IMR-90 (cell line): ENCODE measurements at regions of chr1 and their contacts with region 1.

Region 1: DNA sequence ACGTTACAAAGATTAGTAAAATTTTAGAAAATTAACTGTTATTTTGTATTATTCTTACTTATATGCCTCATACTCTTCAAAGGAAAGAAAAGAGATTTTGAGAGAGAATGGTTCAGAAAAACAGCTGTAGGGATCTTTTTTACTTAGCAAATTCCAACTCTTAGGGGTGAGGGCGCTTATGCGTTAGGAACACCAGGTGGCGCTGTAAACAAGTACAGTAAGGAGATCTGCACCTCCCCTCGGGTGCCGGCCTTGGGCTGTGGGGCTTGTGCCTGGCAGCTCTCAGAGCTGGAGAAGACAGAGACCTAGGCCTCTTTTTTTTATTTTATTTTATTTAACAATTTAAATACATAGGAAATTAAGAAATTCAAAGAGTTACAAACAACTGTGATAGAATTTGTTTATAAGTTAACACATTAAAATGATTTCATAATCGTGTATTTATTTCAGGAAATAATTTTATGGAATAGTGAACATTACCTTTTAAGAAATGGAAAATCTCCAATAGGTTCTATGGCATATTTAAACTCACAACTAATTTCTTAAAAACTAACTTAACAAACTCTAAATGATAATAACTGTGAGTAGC is 32.6 kb downstream of the UTP25 start:
- DNase-seq: peak; percentile 86
- ATAC-seq: peak; percentile 96
- H3K4me3 ChIP-seq: no peak overlapping the region
- H3K27ac ChIP-seq: no peak overlapping the region
- H3K4me1 ChIP-seq: peaks cover 3% of the 10 kb centered on the region; the same call in 1 of the 2 replicates
- H3K27me3 ChIP-seq: peaks cover 2% of the 10 kb centered on the region
- CTCF ChIP-seq: peak; percentile 90
- POLR2A ChIP-seq: no peak
- RAD21 ChIP-seq: peak; percentile 87

Region 2: DNA sequence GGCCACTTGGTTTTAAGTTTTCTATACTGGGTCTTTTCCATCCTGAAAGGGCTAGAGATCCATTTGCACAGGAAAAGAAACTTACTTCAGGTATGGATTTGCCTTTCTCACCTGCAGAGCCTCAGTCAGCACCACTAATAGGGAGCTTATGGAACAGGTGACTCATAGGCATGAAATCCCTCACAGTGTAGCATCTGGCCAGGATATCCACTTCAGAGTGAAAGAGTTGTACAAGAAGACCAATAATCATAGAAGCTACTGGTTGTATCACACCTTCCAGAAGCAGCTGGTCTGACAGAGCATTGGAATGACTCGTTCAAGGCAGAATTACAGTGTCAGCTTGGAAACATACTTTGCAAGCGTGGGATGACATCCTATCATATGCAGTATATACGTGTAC is 51.4 kb after region 1 on chr1:
- CTCF ChIA-PET with region 1: no interaction called
- POLR2A ChIA-PET with region 1: no interaction called
- dilution Hi-C with region 1: no loop called
- in situ Hi-C with region 1: no loop called
- intact Hi-C with region 1: no loop called
- DNase-seq: no peak
- ATAC-seq: no peak
- H3K4me3 ChIP-seq: no peak overlapping the region
- H3K27ac ChIP-seq: no peak overlapping the region
- H3K4me1 ChIP-seq: no peaks in the 10 kb centered on the region
- H3K27me3 ChIP-seq: no peaks in the 10 kb centered on the region
- CTCF ChIP-seq: no peak
- POLR2A ChIP-seq: no peak
- RAD21 ChIP-seq: no peak

Region 3: GRCh38 chr1:209937996-209938959 is 77.9 kb after region 1 on chr1 and contains the start of gene SYT14:
- CTCF ChIA-PET with region 1: no interaction called
- POLR2A ChIA-PET with region 1: no interaction called
- dilution Hi-C with region 1: no loop called
- in situ Hi-C with region 1: no loop called
- intact Hi-C with region 1: loop called (anchors 1 kb)
- DNase-seq: peak; percentile 25
- ATAC-seq: peak; percentile 86
- H3K4me3 ChIP-seq: peak within 1 kb of the TSS; percentile 61
- H3K27ac ChIP-seq: no peak within 1 kb of the TSS; the same call in 1 of the 2 replicates
- H3K4me1 ChIP-seq: no peaks in the 10 kb centered on the region; the same call in 1 of the 2 replicates
- H3K27me3 ChIP-seq: peaks cover 5% of the 10 kb centered on the region
- CTCF ChIP-seq: no peak
- POLR2A ChIP-seq: no peak
- RAD21 ChIP-seq: no peak
- total RNA-seq, gene SYT14: 1.3 and 1.4 TPM in 2 replicates

Region 4: DNA sequence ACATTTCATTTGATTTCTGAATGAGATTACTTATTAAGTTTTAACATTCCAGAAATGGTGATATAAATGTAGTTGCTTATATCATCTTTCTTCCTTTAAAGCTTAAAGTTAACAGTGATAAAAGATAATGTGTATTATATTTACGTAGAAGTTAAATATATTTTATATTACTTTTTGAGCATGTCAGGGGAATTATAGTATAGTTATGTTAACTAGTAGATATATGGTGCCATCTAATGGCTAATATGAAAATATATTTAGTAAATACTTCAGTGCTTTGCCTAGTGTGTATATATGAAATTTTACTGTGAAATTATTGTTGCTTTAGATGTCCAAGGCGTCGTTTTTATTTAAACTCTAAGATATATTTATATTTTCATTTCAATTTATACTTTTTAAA is 129.1 kb after region 1 on chr1:
- CTCF ChIA-PET with region 1: interaction called, 27 read pairs
- POLR2A ChIA-PET with region 1: no interaction called
- dilution Hi-C with region 1: no loop called
- in situ Hi-C with region 1: no loop called
- intact Hi-C with region 1: loop called (anchors 1 kb)
- DNase-seq: peak; percentile 34
- ATAC-seq: peak; percentile 85
- H3K4me3 ChIP-seq: no peak overlapping the region
- H3K27ac ChIP-seq: no peak overlapping the region
- H3K4me1 ChIP-seq: no peaks in the 10 kb centered on the region
- H3K27me3 ChIP-seq: no peaks in the 10 kb centered on the region
- CTCF ChIP-seq: peak; percentile 53
- POLR2A ChIP-seq: no peak
- RAD21 ChIP-seq: peak; percentile 56

Region 5: GRCh38 chr1:210043058-210043457 is 182.7 kb after region 1 on chr1:
- CTCF ChIA-PET with region 1: no interaction called
- POLR2A ChIA-PET with region 1: no interaction called
- dilution Hi-C with region 1: no loop called
- in situ Hi-C with region 1: no loop called
- intact Hi-C with region 1: no loop called
- DNase-seq: no peak
- ATAC-seq: no peak
- H3K4me3 ChIP-seq: no peak overlapping the region
- H3K27ac ChIP-seq: no peak overlapping the region
- H3K4me1 ChIP-seq: no peaks in the 10 kb centered on the region
- H3K27me3 ChIP-seq: no peaks in the 10 kb centered on the region
- CTCF ChIP-seq: no peak
- POLR2A ChIP-seq: no peak
- RAD21 ChIP-seq: no peak

Region 6: GRCh38 chr1:210301615-210302000 is 441.2 kb after region 1 on chr1:
- CTCF ChIA-PET with region 1: no interaction called
- POLR2A ChIA-PET with region 1: no interaction called
- dilution Hi-C with region 1: no loop called
- in situ Hi-C with region 1: loop called (anchors 25 kb)
- intact Hi-C with region 1: no loop called
- DNase-seq: no peak
- ATAC-seq: no peak
- H3K4me3 ChIP-seq: no peak overlapping the region
- H3K27ac ChIP-seq: no peak overlapping the region
- H3K4me1 ChIP-seq: no peaks in the 10 kb centered on the region
- H3K27me3 ChIP-seq: peaks cover 22% of the 10 kb centered on the region
- CTCF ChIP-seq: no peak
- POLR2A ChIP-seq: no peak
- RAD21 ChIP-seq: no peak

Region 7: DNA sequence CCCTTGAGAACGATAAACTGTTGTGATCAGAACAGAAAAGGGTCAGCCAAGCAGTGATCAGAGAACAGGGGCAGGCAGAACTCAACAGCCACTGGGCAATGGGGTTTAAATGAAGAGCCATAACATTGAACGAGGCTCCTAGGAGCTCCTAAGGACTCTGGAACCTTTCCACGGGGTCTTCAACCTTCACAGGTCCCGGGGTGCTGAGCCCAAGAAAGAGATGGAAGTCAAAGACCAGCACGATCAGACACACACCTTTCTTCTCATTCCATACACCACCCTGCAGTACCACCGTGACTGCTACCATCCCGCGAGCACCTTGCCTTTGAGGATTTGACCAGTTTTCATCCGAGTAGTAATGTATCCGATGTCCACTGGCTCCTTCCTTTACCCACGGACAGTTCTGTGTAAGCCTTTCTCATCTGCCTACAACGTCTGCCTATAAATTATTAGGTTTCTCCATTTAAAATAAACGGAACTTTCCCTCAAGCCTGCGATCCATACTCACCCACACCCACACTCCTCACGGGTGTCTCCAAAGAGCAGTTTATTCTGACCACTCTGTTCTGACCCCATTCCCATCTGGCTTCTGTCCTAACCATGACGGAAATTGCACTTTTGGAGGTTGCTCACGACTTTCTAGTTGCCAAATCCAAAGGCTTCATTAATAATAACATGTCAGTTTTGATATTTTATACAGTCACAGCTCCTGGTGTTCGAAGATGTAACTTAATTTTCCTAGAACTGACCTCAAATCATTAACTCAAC is 451.5 kb after region 1 on chr1:
- CTCF ChIA-PET with region 1: no interaction called
- POLR2A ChIA-PET with region 1: no interaction called
- dilution Hi-C with region 1: no loop called
- in situ Hi-C with region 1: loop called (anchors 25 kb)
- intact Hi-C with region 1: loop called (anchors 5 kb)
- DNase-seq: no peak
- ATAC-seq: no peak
- H3K4me3 ChIP-seq: no peak overlapping the region
- H3K27ac ChIP-seq: no peak overlapping the region
- H3K4me1 ChIP-seq: 0 out of 2 replicates have a peak, but pooled peaks cover 2% of the 10 kb centered on the region
- H3K27me3 ChIP-seq: peaks cover 36% of the 10 kb centered on the region
- CTCF ChIP-seq: no peak
- POLR2A ChIP-seq: no peak
- RAD21 ChIP-seq: no peak